K562 (cell line): ENCODE measurements at regions of chr17 and their contacts with region 1.

Region 1: DNA sequence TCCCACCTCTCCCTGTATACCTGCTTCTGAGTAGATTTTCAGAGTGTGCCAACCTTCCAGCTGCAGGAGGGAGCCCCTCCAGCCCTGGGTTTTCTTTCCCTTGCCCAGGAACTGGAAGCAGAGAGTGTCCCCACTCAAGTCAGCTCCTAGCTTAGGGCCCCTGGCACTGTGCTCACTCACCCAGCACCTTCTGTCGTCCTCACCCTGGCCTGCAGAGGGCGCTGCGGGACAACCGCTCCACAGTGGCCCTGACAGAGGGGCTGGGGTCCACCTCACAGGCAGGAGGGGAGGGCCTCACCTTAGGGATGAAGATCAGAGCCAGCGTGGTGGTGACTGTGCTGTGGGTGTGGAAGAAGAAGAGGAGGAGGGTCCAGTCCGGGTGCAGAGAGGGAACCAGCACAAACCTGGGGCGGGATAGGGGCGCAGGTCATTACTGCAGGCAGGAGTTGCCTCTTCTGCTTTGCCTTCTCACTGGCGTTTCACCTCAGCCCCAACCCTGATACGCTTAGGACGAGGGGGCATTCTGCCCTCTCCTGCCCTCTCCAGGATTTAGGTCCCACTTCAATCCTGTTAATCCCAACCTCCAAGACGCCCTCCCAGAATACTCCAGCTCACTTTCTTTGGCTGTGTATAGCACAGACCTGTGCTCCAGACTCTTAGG is 10.0 kb downstream of the GPR179 start:
- DNase-seq: peak; percentile 74 to 84 (median 80)
- ATAC-seq: peak; percentile 92
- H3K4me3 ChIP-seq: no peak overlapping the region
- H3K27ac ChIP-seq: no peak overlapping the region
- H3K4me1 ChIP-seq: peaks cover 0 to 17% of the 10 kb centered on the region in 2 experiments; a peak in 1 of 5 replicates
- H3K27me3 ChIP-seq: peaks cover 70 to 98% of the 10 kb centered on the region in 2 experiments
- CTCF ChIP-seq: peak; percentile 76 to 96 (median 91)
- EP300 ChIP-seq: no peak
- POLR2A ChIP-seq: no peak
- RAD21 ChIP-seq: peak in 1 of 2 experiments; percentile 75; a peak in 2 of 4 replicates

Region 2: DNA sequence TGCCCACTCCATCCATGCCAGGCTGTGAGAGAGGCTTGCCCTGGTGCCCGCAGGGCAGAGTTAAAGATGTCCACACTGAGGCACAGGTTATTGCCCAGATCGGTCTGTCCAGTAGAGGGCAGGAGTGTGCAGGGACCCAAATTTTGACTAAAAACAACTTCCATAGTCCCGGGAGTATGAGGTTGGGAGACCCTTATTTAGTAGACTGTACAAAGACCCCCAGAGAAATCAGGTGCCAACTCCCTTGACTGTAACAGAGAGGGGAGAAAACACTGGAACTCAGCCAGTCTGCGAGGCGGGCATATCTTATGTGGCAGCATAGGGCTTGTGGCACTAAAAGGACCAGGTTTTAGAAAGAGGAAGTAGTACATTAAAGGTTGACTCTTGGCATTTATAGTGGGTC is 632.3 kb before region 1 on chr17:
- CTCF ChIA-PET with region 1: no interaction called
- POLR2A ChIA-PET with region 1: no interaction called
- in situ Hi-C with region 1: no loop called
- intact Hi-C with region 1: no loop called
- DNase-seq: peak; percentile 41 to 59 (median 56)
- ATAC-seq: peak; percentile 79
- H3K4me3 ChIP-seq: no peak overlapping the region
- H3K27ac ChIP-seq: no peak overlapping the region
- H3K4me1 ChIP-seq: no peaks in the 10 kb centered on the region
- H3K27me3 ChIP-seq: peaks cover 2 to 43% of the 10 kb centered on the region in 2 experiments
- CTCF ChIP-seq: peak; percentile 64 to 82 (median 79)
- EP300 ChIP-seq: no peak
- POLR2A ChIP-seq: no peak
- RAD21 ChIP-seq: peak; percentile 38 to 65

Region 3: GRCh38 chr17:38410201-38410600 is 76.4 kb after region 1 on chr17:
- CTCF ChIA-PET with region 1: interaction called, 20 read pairs
- POLR2A ChIA-PET with region 1: interaction called, 5 read pairs
- in situ Hi-C with region 1: no loop called
- intact Hi-C with region 1: loop called (anchors 5 kb)
- DNase-seq: no peak
- ATAC-seq: no peak
- H3K4me3 ChIP-seq: no peak overlapping the region
- H3K27ac ChIP-seq: no peak overlapping the region
- H3K4me1 ChIP-seq: peaks cover 4 to 6% of the 10 kb centered on the region in 2 experiments
- H3K27me3 ChIP-seq: peaks cover 9 to 24% of the 10 kb centered on the region in 2 experiments; a peak in 4 of 5 replicates
- CTCF ChIP-seq: no peak
- EP300 ChIP-seq: no peak
- POLR2A ChIP-seq: no peak
- RAD21 ChIP-seq: no peak

Region 4: GRCh38 chr17:38415250-38416194 is 81.8 kb after region 1 on chr17:
- CTCF ChIA-PET with region 1: interaction called, 20 read pairs
- POLR2A ChIA-PET with region 1: interaction called, 5 read pairs
- in situ Hi-C with region 1: no loop called
- intact Hi-C with region 1: loop called (anchors 5 kb)
- DNase-seq: peak in 1 of 4 experiments; percentile 37
- ATAC-seq: peak; percentile 87
- H3K4me3 ChIP-seq: no peak overlapping the region
- H3K27ac ChIP-seq: no peak overlapping the region; the same call in 2 of the 3 replicates
- H3K4me1 ChIP-seq: peaks cover 30 to 41% of the 10 kb centered on the region in 2 experiments
- H3K27me3 ChIP-seq: peaks cover 11 to 34% of the 10 kb centered on the region in 2 experiments; a peak in 4 of 5 replicates
- CTCF ChIP-seq: no peak
- EP300 ChIP-seq: peak; percentile 43; the same call in 1 of the 2 replicates
- POLR2A ChIP-seq: no peak
- RAD21 ChIP-seq: no peak; a peak in 1 of 4 replicates

Region 5: DNA sequence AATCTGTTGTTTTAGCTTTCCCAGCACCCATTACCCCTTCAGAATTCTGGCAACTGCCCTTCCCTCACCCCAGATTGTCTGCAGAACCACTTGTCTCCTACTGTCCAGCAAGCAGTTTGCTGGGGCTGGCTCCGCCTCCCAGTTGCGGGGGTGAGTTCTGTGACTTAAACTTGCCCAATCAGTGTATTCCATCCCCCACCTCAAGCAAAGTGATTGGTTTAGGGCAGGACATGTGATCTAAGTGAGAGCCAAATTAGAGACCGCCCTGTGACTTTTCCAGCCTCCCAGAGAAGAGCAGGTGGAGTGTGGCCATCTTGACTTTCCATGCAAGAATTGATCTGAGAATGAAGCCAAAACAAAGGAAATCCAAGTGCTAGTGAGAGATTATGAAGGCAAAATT is 294.7 kb after region 1 on chr17:
- CTCF ChIA-PET with region 1: no interaction called
- POLR2A ChIA-PET with region 1: no interaction called
- in situ Hi-C with region 1: no loop called
- intact Hi-C with region 1: no loop called
- DNase-seq: peak; percentile 72 to 85 (median 78)
- ATAC-seq: peak; percentile 99
- H3K4me3 ChIP-seq: no peak overlapping the region
- H3K27ac ChIP-seq: no peak overlapping the region
- H3K4me1 ChIP-seq: no peaks in the 10 kb centered on the region; a peak in 2 of 5 replicates
- H3K27me3 ChIP-seq: peaks cover 2 to 4% of the 10 kb centered on the region in 2 experiments; a peak in 2 of 5 replicates
- CTCF ChIP-seq: no peak
- EP300 ChIP-seq: no peak
- POLR2A ChIP-seq: no peak
- RAD21 ChIP-seq: no peak

Region 6: DNA sequence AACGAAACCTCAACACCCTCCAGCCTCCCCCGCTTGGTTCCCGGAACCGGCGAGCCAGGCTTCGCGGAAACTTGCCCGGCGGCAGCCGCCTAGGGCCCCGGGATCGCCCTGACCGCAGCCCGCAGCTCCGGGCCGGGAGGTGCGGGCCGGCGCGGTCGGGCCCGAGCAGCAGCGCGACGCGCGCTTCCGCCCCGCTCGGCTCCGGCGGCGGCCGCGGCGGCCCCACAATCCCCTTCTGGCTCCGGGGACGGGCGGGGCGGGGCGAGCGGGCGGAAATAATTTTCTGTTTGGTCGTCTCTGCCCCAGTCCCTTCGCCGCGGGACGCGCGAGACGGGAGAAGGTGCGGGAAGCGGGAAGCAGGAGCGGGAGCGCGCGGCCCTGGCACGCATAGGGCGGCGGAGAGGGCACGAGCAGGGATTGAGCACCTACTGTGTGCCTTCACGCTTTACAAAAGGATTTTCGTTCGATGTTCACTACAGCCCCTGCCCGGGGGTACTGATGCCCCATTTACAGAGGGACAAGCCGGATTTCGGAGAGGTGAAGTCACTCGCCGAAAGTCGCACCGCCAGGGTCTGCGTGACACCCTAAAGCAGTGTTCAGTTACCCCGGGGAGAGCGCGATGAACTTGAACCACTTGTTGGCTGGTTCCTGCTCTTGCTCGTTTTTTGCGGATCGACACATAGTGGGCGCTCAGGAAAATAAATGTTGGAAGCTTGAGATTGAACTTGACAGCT is 368.6 kb after region 1 on chr17:
- CTCF ChIA-PET with region 1: no interaction called
- POLR2A ChIA-PET with region 1: no interaction called
- in situ Hi-C with region 1: no loop called
- intact Hi-C with region 1: no loop called
- DNase-seq: peak; percentile 78 to 92 (median 83)
- ATAC-seq: peak; percentile 68
- H3K4me3 ChIP-seq: peak overlapping the region; percentile 86
- H3K27ac ChIP-seq: peak overlapping the region; percentile 96
- H3K4me1 ChIP-seq: peaks cover 26 to 64% of the 10 kb centered on the region in 2 experiments
- H3K27me3 ChIP-seq: no peaks in the 10 kb centered on the region
- CTCF ChIP-seq: no peak
- EP300 ChIP-seq: no peak
- POLR2A ChIP-seq: peak; percentile 87
- RAD21 ChIP-seq: no peak